ENCODE measurements at regions of chr18 and their contacts with region 1.

Region 1: GRCh38 chr18:48037481-48038271 is 107.2 kb upstream of the SMAD2 start:
- DNase-seq: peak; percentile 37 to 41
- ATAC-seq: peak; percentile 31 to 86 (median 74)
- H3K4me3 ChIP-seq: no peak overlapping the region
- H3K27ac ChIP-seq: no peak overlapping the region
- H3K4me1 ChIP-seq: peaks cover 0 to 29% (median 2%) of the 10 kb centered on the region in 9 donors
- H3K27me3 ChIP-seq: no peaks in the 10 kb centered on the region
- CTCF ChIP-seq: peak in 8 of 9 donors; percentile 40 to 68 (median 56)

Region 2: DNA sequence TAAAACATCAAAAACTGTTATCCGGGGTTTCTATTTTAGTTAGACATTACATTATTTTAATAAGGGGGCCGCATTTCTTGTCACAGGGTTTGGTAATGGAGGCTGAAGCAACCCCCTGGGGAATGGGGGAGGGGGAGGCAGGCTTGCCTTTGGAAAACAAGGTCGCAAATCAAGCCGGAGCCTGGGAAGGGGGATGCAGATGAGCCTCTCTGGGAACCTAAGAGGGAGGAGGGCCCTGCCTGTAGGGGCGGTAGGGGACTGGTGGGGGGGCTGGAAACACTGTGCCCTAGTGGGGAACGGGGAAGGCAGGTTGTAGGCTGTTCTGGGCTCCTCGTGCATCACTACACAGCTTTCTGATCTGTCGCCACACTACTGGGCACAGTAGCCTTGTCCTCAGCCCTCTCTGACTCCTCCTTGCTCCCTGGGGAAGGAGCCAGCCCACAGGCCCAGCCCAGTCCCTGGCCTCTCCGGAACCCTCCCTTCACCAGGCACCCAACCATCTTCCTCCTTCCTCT is 63.0 kb after region 1 on chr18:
- intact Hi-C with region 1: loop called in 1 of 10 experiments (anchors 5 kb)
- DNase-seq: no peak
- ATAC-seq: no peak
- H3K4me3 ChIP-seq: no peak overlapping the region
- H3K27ac ChIP-seq: no peak overlapping the region
- H3K4me1 ChIP-seq: peaks cover 0 to 4% (median 0%) of the 10 kb centered on the region in 9 donors
- H3K27me3 ChIP-seq: peaks cover 0 to 10% (median 0%) of the 10 kb centered on the region in 7 donors
- CTCF ChIP-seq: no peak

Region 3: GRCh38 chr18:48230467-48231113 is 192.9 kb after region 1 on chr18:
- intact Hi-C with region 1: loop called in 2 of 10 experiments (anchors 5 to 10 kb)
- DNase-seq: peak; percentile 22 to 37
- ATAC-seq: peak in 6 of 8 donors; percentile 45 to 64 (median 56)
- H3K4me3 ChIP-seq: no peak overlapping the region
- H3K27ac ChIP-seq: no peak overlapping the region
- H3K4me1 ChIP-seq: peaks cover 9 to 39% (median 28%) of the 10 kb centered on the region in 9 donors
- H3K27me3 ChIP-seq: peaks cover 0 to 10% (median 0%) of the 10 kb centered on the region in 7 donors
- CTCF ChIP-seq: peak in 7 of 9 donors; percentile 23 to 60 (median 49)